ENCODE measurements at regions of chr4 and their contacts with region 1.

Region 1: DNA sequence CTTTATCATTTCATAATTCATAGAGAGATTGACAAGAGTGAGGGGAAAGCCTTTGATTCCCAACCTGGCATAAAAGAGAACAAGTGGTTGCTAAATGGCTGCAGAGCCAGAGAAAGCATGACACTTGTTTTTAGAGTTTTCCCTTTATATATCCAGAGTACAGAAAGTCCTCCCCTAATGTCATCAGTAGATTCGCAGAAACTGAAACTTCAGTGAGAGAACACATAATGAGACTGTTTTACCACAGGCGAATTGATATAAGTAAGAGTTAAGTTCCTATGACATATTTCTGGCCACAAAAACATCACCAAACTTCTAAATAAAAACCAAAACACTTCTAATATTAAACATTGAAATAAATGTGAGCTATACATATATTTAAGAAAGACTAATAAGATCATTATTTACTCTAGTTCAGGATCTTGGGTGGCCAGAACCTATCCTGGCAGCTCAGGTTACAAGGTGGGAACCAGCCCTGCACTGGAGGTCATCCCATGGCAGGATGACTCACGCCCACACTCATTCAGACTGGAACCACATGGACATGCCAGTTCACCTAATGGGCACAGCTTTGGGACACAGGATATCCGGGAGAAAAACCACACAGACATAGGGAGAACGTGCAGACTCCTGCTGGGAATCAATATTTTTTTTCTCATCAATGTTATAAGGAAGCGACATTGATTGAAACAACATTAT is 35.5 kb downstream of the NWD2 start:
- DNase-seq: no peak
- ATAC-seq: peak; percentile 71
- H3K4me3 ChIP-seq: no peak overlapping the region
- H3K27ac ChIP-seq: no peak overlapping the region
- H3K4me1 ChIP-seq: no peaks in the 10 kb centered on the region
- H3K27me3 ChIP-seq: no peaks in the 10 kb centered on the region
- CTCF ChIP-seq: no peak
- EP300 ChIP-seq: no peak
- POLR2A ChIP-seq: no peak
- RAD21 ChIP-seq: no peak

Region 2: DNA sequence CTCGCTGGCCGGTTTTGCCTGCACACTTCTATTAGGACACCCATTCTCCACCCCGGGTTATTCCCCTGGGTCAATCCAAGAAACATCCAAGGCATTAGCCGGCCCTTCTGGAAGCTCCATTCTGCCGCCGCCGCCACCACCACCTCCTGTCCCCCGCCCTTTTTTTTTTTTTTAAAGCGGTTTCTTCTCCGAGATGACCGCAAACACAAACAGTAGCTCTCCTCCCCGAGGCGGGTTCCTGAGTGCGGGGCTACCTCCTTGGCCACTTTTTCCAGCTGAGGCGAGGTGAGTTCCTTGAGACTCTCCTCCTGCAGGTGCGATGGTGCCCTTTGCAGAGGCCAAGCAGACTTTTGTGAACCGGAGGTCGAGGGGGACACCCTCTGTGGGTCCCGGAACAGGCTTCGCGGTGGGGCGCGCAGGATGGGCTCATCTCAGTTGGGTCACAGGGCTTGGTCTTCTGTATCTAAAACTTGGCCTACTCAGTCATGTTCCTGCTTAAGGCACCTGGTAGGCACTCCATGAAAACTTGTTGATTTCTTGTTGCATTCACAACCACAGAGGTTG is 34.6 kb before region 1 on chr4:
- CTCF ChIA-PET with region 1: no interaction called
- POLR2A ChIA-PET with region 1: no interaction called
- RAD21 ChIA-PET with region 1: no interaction called
- SMC1A ChIA-PET with region 1: no interaction called
- in situ Hi-C with region 1: no loop called
- intact Hi-C with region 1: no loop called
- DNase-seq: no peak
- ATAC-seq: no peak
- H3K4me3 ChIP-seq: no peak overlapping the region
- H3K27ac ChIP-seq: no peak overlapping the region
- H3K4me1 ChIP-seq: no peaks in the 10 kb centered on the region
- H3K27me3 ChIP-seq: peaks cover 0 to 5% of the 10 kb centered on the region in 2 experiments; a peak in 3 of 4 replicates
- CTCF ChIP-seq: no peak
- EP300 ChIP-seq: no peak
- POLR2A ChIP-seq: no peak
- RAD21 ChIP-seq: no peak

Region 3: GRCh38 chr4:37299468-37299867 is 19.4 kb after region 1 on chr4:
- CTCF ChIA-PET with region 1: no interaction called
- POLR2A ChIA-PET with region 1: no interaction called
- RAD21 ChIA-PET with region 1: no interaction called
- SMC1A ChIA-PET with region 1: no interaction called
- in situ Hi-C with region 1: no loop called
- intact Hi-C with region 1: loop called (anchors 2 kb)
- DNase-seq: no peak
- ATAC-seq: no peak; the same call in 2 of the 3 replicates
- H3K4me3 ChIP-seq: no peak overlapping the region
- H3K27ac ChIP-seq: no peak overlapping the region
- H3K4me1 ChIP-seq: no peaks in the 10 kb centered on the region
- H3K27me3 ChIP-seq: no peaks in the 10 kb centered on the region
- CTCF ChIP-seq: no peak
- EP300 ChIP-seq: no peak
- POLR2A ChIP-seq: no peak
- RAD21 ChIP-seq: no peak

Measured in GM12878 (cell line).